Activated CD4-positive, alpha-beta T cell treated with anti-CD3 and anti-CD28 coated beads for 36 hours (primary cell): ENCODE measurements at regions of chr2 and their contacts with region 1.

Region 1: GRCh38 chr2:136135921-136136906 is 18.3 kb upstream of the CXCR4 start:
- DNase-seq: peak; percentile 73
- ATAC-seq: peak; percentile 57
- H3K4me3 Mint-ChIP-seq: peak overlapping the region; percentile 20
- H3K27ac Mint-ChIP-seq: peak overlapping the region; percentile 78
- H3K4me1 Mint-ChIP-seq: peaks cover 91% of the 10 kb centered on the region
- H3K27me3 Mint-ChIP-seq: peaks cover 19% of the 10 kb centered on the region

Region 2: DNA sequence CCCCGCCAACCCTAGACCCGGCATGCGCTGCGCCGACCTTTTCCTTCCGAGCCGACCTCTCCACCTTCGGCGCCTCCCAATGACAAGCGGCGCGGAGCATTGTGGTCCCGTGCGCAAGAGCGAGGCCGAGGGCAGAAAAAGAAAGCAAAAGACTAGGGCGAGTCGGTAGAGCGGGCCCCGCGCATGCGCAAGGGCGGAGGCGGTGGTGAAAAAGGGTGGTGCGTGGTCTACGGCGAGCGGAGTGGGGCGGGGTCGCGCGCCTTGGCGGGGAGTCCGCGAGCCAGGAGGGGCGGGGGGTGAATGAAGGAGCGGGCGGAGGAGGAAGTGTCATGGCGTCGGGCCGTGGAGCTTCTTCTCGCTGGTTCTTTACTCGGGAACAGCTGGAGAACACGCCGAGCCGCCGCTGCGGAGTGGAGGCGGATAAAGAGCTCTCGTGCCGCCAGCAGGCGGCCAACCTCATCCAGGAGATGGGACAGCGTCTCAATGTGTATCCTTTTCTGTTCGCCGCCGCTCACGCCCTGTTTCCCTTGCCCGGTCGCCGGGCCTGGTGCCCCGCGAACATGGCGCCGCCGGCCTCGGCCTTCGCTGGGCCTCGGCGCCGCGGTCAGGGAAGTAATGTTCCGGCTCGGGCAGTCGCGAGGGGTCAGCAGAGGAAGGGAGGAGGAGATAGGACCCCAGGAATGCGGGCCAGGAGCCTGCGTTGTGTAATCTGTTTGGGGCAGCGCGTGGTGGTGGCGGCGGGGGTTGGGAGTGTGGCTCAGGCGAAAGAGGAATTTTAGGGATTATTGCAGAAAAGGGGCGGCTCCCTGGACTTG is 1217.5 kb before region 1 on chr2 and contains the start of gene CCNT2:
- CTCF ChIA-PET with region 1: no interaction called
- POLR2A ChIA-PET with region 1: no interaction called
- intact Hi-C with region 1: loop called in 1 of 2 experiments (anchors 2 kb)
- DNase-seq: peak; percentile 100
- ATAC-seq: peak; percentile 89
- H3K4me3 Mint-ChIP-seq: peak within 1 kb of the TSS; percentile 92
- H3K27ac Mint-ChIP-seq: peak within 1 kb of the TSS; percentile 98
- H3K4me1 Mint-ChIP-seq: peaks cover 27% of the 10 kb centered on the region
- H3K27me3 Mint-ChIP-seq: no peaks in the 10 kb centered on the region
- total RNA-seq, gene CCNT2: 29.3 to 36.6 TPM

Region 3: DNA sequence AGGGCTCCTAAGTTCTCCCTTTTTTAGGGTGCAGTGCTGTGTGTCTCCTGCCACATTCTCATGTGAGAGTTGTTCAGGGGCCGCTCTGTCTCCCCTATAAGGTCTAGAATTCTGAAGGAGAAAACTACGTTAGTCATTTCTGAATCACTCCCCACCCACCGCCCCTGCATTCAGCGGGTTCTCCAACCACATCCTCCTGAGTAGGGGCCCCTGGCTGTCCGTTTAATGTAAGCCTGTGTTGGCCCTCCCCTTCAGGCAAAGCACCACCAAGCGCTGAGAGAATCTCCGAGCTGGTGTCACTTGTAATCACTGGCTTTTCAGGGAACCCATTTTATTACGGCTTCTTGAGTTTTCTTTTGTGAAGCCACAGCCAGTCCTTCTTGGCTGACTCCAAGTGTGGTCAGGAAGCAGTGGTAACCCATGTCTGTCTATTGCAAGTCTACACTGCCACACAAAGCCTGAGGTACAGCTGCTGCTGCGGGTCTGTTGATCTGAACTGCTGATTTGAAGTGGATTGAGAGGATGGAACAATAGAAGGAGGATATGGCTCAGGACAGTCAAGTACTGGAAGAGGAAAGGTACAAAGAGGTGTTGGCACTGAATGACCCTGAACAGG is 316.1 kb before region 1 on chr2:
- CTCF ChIA-PET with region 1: interaction called, 5 read pairs
- POLR2A ChIA-PET with region 1: no interaction called
- intact Hi-C with region 1: loop called in 1 of 2 experiments (anchors 1 kb)
- DNase-seq: peak; percentile 94
- ATAC-seq: peak; percentile 93
- H3K4me3 Mint-ChIP-seq: peak overlapping the region; percentile 71
- H3K27ac Mint-ChIP-seq: peak overlapping the region; percentile 87
- H3K4me1 Mint-ChIP-seq: peaks cover 45% of the 10 kb centered on the region
- H3K27me3 Mint-ChIP-seq: no peaks in the 10 kb centered on the region

Region 4: GRCh38 chr2:135985018-135985825 is 151.0 kb before region 1 on chr2 and contains the start of gene DARS1:
- CTCF ChIA-PET with region 1: interaction called, 6 read pairs
- POLR2A ChIA-PET with region 1: interaction called, 3 read pairs
- intact Hi-C with region 1: loop called (anchors 1 to 2 kb)
- DNase-seq: peak; percentile 92
- ATAC-seq: peak; percentile 82
- H3K4me3 Mint-ChIP-seq: peak within 1 kb of the TSS; percentile 93
- H3K27ac Mint-ChIP-seq: peak within 1 kb of the TSS; percentile 97
- H3K4me1 Mint-ChIP-seq: peaks cover 44% of the 10 kb centered on the region
- H3K27me3 Mint-ChIP-seq: no peaks in the 10 kb centered on the region
- total RNA-seq, gene DARS1: 174 to 190 TPM

Region 5: DNA sequence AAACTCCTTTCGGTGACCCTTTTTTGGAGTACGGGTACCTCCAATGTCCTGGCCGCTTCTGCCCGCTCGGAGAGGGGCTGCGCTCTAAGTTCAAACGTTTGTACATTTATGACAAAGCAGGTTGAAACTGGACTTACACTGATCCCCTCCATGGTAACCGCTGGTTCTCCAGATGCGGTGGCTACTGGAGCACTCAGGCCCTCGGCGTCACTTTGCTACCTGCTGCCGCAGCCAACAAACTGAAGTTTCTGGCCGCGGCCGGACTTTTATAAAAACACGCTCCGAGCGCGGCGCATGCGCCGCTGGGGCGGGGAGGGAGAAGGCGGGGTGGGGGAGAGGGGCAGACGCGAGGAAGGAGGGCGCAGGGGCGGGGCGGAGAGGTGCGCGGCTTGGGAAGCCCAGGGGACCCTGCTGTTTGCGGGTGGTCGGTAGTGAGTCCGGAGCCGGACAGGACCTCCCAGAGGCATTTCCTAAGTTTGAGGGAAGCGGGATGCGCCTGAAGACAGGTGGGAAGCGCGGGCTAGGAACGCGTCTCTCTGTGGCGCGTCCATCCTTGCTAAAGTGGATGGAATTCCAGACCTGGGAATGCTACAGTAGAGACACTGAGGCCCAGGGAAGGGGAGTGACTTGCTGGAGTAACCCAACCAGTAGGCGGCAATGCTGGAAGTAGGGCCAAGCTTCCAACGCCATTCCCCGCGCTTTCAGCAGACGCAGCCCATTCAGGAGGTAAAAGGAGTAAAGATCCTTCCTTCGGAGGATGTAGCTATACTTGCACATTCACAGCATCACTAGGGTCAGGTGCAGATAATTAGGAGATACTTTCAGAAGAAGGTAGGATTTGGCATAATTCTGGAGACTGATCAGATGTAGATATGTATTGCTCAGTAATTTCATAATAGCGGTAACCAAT is 18.1 kb before region 1 on chr2 and contains the start of gene CXCR4:
- CTCF ChIA-PET with region 1: interaction called, 4 read pairs
- POLR2A ChIA-PET with region 1: interaction called, 6 read pairs
- intact Hi-C with region 1: loop called (anchors 1 kb)
- DNase-seq: peak; percentile 90
- ATAC-seq: peak; percentile 34
- H3K4me3 Mint-ChIP-seq: peak within 1 kb of the TSS; percentile 94
- H3K27ac Mint-ChIP-seq: peak within 1 kb of the TSS; percentile 93
- H3K4me1 Mint-ChIP-seq: peaks cover 60% of the 10 kb centered on the region
- H3K27me3 Mint-ChIP-seq: peaks cover 2% of the 10 kb centered on the region
- total RNA-seq, gene CXCR4: 75.4 to 89.3 TPM

Region 6: GRCh38 chr2:136238286-136239078 is 102.3 kb after region 1 on chr2:
- CTCF ChIA-PET with region 1: interaction called, 3 read pairs
- POLR2A ChIA-PET with region 1: interaction called, 8 read pairs
- intact Hi-C with region 1: loop called (anchors 2 kb)
- DNase-seq: peak; percentile 44
- ATAC-seq: peak; percentile 82
- H3K4me3 Mint-ChIP-seq: peak overlapping the region; percentile 15
- H3K27ac Mint-ChIP-seq: peak overlapping the region; percentile 93
- H3K4me1 Mint-ChIP-seq: peaks cover 43% of the 10 kb centered on the region
- H3K27me3 Mint-ChIP-seq: no peaks in the 10 kb centered on the region

Region 7: DNA sequence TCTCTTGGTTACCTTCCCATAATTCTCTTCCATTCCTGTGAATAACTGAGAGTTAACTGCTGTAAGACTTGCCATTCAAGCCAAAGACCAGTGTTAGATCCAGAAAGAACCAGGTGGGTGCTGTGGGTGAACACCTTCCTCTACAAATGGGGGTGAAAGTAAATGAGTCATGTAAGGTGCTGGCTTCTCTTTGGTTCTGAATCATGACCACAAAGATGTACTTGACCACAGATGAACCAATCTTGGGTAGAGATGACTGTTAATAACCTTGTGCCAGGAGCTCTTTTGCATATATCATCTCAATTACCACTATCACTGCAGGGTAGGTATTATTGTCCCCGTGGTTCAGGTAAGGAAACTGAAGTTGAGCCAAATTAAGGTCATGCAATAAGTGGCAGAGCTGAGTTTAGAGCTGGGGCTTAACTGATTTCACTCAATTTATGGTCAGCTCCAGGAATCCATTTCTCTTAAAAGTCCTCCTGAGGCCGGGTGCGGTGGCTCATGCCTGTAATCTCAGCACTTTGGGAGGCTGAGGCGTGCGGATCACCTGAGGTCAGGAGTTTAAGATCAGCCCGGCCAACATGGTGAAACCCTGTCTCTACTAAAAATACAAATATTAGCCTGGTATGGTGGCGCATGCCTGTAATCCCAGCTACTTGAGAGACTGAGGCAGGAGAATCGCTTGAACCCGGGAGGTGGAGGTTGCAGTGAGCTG is 226.6 kb after region 1 on chr2:
- CTCF ChIA-PET with region 1: no interaction called
- POLR2A ChIA-PET with region 1: interaction called, 11 read pairs
- intact Hi-C with region 1: loop called (anchors 1 kb)
- DNase-seq: peak; percentile 65
- ATAC-seq: peak; percentile 82
- H3K4me3 Mint-ChIP-seq: no peak overlapping the region
- H3K27ac Mint-ChIP-seq: peak overlapping the region; percentile 63
- H3K4me1 Mint-ChIP-seq: peaks cover 54% of the 10 kb centered on the region
- H3K27me3 Mint-ChIP-seq: peaks cover 12% of the 10 kb centered on the region